B cell (primary cell): ENCODE measurements at regions of chr19 and their contacts with region 1.

Region 1: DNA sequence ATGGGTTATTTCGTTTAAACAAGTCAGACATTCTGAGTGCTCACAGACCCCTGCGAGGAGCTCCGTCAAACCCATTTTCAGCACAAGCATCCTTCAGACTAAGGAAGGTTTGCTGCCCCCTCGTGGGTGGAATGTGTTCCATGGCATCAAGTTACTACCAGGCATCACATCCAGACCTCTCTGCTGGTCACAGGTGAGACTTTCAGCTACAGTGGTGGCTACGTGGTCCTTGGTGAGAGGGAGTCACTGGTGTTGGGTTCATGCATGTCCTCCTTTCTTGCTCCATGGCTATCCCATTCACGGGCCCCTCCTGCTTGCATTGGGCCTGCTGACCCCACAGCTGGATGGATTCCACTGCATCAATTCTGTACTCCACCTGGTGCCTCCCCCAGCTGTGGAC is 9.1 kb upstream of the LILRB5 start:
- DNase-seq: peak; percentile 80
- ATAC-seq: peak; percentile 69
- H3K4me3 ChIP-seq: no peak overlapping the region
- H3K4me3 Mint-ChIP-seq: no peak overlapping the region
- H3K27ac ChIP-seq: no peak overlapping the region
- H3K27ac Mint-ChIP-seq: no peak overlapping the region
- H3K4me1 ChIP-seq: no peaks in the 10 kb centered on the region
- H3K4me1 Mint-ChIP-seq: peaks cover 4% of the 10 kb centered on the region
- H3K27me3 ChIP-seq: peaks cover 0 to 20% (median 6%) of the 10 kb centered on the region in 4 experiments
- H3K27me3 Mint-ChIP-seq: peaks cover 34% of the 10 kb centered on the region
- CTCF ChIP-seq: peak; percentile 87

Region 2: GRCh38 chr19:54168174-54168917 is 97.8 kb before region 1 on chr19:
- CTCF ChIA-PET with region 1: interaction called, 20 read pairs
- POLR2A ChIA-PET with region 1: no interaction called
- intact Hi-C with region 1: no loop called
- DNase-seq: peak; percentile 89
- ATAC-seq: peak; percentile 89
- H3K4me3 ChIP-seq: no peak overlapping the region
- H3K4me3 Mint-ChIP-seq: no peak overlapping the region
- H3K27ac ChIP-seq: no peak overlapping the region
- H3K27ac Mint-ChIP-seq: no peak overlapping the region
- H3K4me1 ChIP-seq: peaks cover 18 to 22% of the 10 kb centered on the region in 2 donors
- H3K4me1 Mint-ChIP-seq: peaks cover 24% of the 10 kb centered on the region
- H3K27me3 ChIP-seq: peaks cover 0 to 23% (median 13%) of the 10 kb centered on the region in 4 experiments
- H3K27me3 Mint-ChIP-seq: peaks cover 16% of the 10 kb centered on the region
- CTCF ChIP-seq: peak; percentile 89

Region 3: GRCh38 chr19:54179921-54180461 is 86.1 kb before region 1 on chr19:
- CTCF ChIA-PET with region 1: no interaction called
- POLR2A ChIA-PET with region 1: no interaction called
- intact Hi-C with region 1: no loop called
- DNase-seq: peak; percentile 31
- ATAC-seq: peak; percentile 14
- H3K4me3 ChIP-seq: no peak overlapping the region
- H3K4me3 Mint-ChIP-seq: no peak overlapping the region
- H3K27ac ChIP-seq: no peak overlapping the region
- H3K27ac Mint-ChIP-seq: no peak overlapping the region
- H3K4me1 ChIP-seq: no peaks in the 10 kb centered on the region
- H3K4me1 Mint-ChIP-seq: no peaks in the 10 kb centered on the region
- H3K27me3 ChIP-seq: no peaks in the 10 kb centered on the region
- H3K27me3 Mint-ChIP-seq: no peaks in the 10 kb centered on the region
- CTCF ChIP-seq: no peak

Region 4: DNA sequence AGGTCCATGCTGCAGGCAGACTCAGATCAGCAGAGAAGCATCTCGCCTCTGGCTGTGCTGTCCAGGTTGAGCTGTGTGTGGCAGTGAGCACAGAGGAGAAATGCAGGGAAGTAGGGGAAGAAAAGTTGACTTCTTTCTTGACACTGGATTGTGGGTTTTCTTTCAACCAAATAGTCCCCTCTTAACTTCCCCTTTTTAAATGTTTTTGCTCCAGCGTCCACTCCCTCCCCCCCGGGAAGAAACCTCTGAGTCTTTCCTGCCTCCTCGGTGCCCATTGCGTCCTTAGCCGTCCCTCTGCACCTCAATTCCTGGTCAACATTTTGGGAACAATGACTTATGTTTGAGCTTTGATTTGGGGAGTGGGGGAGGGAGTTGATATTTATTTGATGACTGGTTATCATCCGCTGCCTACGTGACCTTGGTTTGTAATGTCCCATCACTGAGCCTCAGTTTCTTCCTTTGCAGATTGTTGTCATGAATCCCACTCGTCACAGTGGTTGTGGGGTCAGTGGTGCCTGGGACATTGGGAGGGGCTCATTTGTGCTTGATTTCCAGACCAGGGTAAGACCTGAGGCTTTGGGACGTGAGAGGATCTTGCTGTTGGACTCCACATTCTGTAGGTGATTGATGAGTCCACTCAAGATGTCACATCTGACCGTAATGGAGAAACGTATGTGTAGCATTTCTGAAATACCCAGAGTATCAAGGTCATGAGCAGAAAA is 15.0 kb after region 1 on chr19 and contains the start of gene LILRB2:
- CTCF ChIA-PET with region 1: interaction called, 49 read pairs
- POLR2A ChIA-PET with region 1: no interaction called
- intact Hi-C with region 1: no loop called
- DNase-seq: peak; percentile 59
- ATAC-seq: peak; percentile 7
- H3K4me3 ChIP-seq: peak within 1 kb of the TSS; percentile 2 to 50 (median 13)
- H3K4me3 Mint-ChIP-seq: peak within 1 kb of the TSS; percentile 89
- H3K27ac ChIP-seq: no peak within 1 kb of the TSS
- H3K27ac Mint-ChIP-seq: peak within 1 kb of the TSS; percentile 79
- H3K4me1 ChIP-seq: peaks cover 62 to 64% of the 10 kb centered on the region in 2 donors
- H3K4me1 Mint-ChIP-seq: peaks cover 65% of the 10 kb centered on the region
- H3K27me3 ChIP-seq: peaks cover 0 to 23% (median 3%) of the 10 kb centered on the region in 4 experiments
- H3K27me3 Mint-ChIP-seq: peaks cover 5% of the 10 kb centered on the region
- CTCF ChIP-seq: no peak
- total RNA-seq, gene LILRB2: 8.3 and 9.2 TPM in 2 replicates

Region 5: DNA sequence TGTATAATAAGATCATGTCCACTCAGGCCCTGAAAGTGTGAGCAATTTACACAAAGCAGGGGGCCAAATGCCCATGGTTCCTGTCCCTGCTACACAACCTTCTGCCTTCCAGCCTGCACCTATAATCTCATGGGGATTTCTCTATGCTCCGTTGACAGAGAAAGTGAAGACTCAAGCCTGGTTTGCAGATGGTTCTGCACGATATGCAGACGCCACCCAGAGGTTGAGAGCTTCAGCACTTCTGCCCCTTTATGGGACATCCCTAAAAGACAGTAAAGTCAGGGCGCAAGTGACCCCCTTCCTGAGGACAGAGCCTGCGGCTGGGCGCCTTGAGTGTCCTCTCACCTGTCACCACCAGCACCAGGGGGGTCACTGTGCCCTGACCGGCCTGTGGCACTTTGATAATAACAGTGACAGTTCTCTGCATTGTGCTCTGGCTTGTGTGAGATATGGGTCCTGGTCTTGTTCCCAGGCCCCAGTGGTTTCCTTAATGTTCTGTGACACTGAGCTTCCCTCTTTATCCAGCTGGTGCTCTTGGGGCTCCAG is 31.7 kb after region 1 on chr19:
- CTCF ChIA-PET with region 1: interaction called, 31 read pairs
- POLR2A ChIA-PET with region 1: no interaction called
- intact Hi-C with region 1: no loop called
- DNase-seq: peak; percentile 49
- ATAC-seq: peak; percentile 60
- H3K4me3 ChIP-seq: no peak overlapping the region
- H3K4me3 Mint-ChIP-seq: no peak overlapping the region
- H3K27ac ChIP-seq: no peak overlapping the region
- H3K27ac Mint-ChIP-seq: peak overlapping the region; percentile 20
- H3K4me1 ChIP-seq: peaks cover 0 to 4% of the 10 kb centered on the region in 2 donors
- H3K4me1 Mint-ChIP-seq: peaks cover 5% of the 10 kb centered on the region
- H3K27me3 ChIP-seq: peaks cover 0 to 73% (median 28%) of the 10 kb centered on the region in 4 experiments
- H3K27me3 Mint-ChIP-seq: peaks cover 63% of the 10 kb centered on the region
- CTCF ChIP-seq: peak; percentile 23

Region 6: GRCh38 chr19:54316746-54317107 is 50.6 kb after region 1 on chr19:
- CTCF ChIA-PET with region 1: interaction called, 14 read pairs
- POLR2A ChIA-PET with region 1: interaction called, 5 read pairs
- intact Hi-C with region 1: no loop called
- DNase-seq: no peak
- ATAC-seq: no peak
- H3K4me3 ChIP-seq: no peak overlapping the region
- H3K4me3 Mint-ChIP-seq: no peak overlapping the region
- H3K27ac ChIP-seq: no peak overlapping the region
- H3K27ac Mint-ChIP-seq: no peak overlapping the region
- H3K4me1 ChIP-seq: peaks cover 21 to 29% of the 10 kb centered on the region in 2 donors
- H3K4me1 Mint-ChIP-seq: peaks cover 32% of the 10 kb centered on the region
- H3K27me3 ChIP-seq: peaks cover 0 to 35% (median 18%) of the 10 kb centered on the region in 4 experiments
- H3K27me3 Mint-ChIP-seq: peaks cover 34% of the 10 kb centered on the region
- CTCF ChIP-seq: no peak

Region 7: GRCh38 chr19:54352041-54352440 is 85.9 kb after region 1 on chr19:
- CTCF ChIA-PET with region 1: interaction called, 23 read pairs
- POLR2A ChIA-PET with region 1: no interaction called
- intact Hi-C with region 1: no loop called
- DNase-seq: peak; percentile 61
- ATAC-seq: peak; percentile 79
- H3K4me3 ChIP-seq: peak overlapping the region in 1 of 5 experiments; percentile 2
- H3K4me3 Mint-ChIP-seq: peak overlapping the region; percentile 66
- H3K27ac ChIP-seq: peak overlapping the region; percentile 69 to 71
- H3K27ac Mint-ChIP-seq: peak overlapping the region; percentile 89
- H3K4me1 ChIP-seq: peaks cover 49 to 62% of the 10 kb centered on the region in 2 donors
- H3K4me1 Mint-ChIP-seq: peaks cover 55% of the 10 kb centered on the region
- H3K27me3 ChIP-seq: peaks cover 0 to 2% (median 0%) of the 10 kb centered on the region in 4 experiments
- H3K27me3 Mint-ChIP-seq: no peaks in the 10 kb centered on the region
- CTCF ChIP-seq: peak; percentile 30